Activated CD8-positive, alpha-beta T cell treated with anti-CD3 and anti-CD28 coated beads, Interleukin-2, amount 10 ng/mL, durations not matched to agents 7 days and 5 days (primary cell): ENCODE measurements at regions of chr6 and their contacts with region 1.

Region 1: GRCh38 chr6:13336553-13336952 is 8.2 kb upstream of the TBC1D7 start:
- DNase-seq: peak; percentile 85
- ATAC-seq: peak; percentile 60
- H3K4me3 Mint-ChIP-seq: no peak overlapping the region
- H3K27ac Mint-ChIP-seq: no peak overlapping the region
- H3K4me1 Mint-ChIP-seq: peaks cover 32% of the 10 kb centered on the region
- H3K27me3 Mint-ChIP-seq: peaks cover 6% of the 10 kb centered on the region

Region 2: GRCh38 chr6:13272131-13273046 is 64.2 kb before region 1 on chr6:
- CTCF ChIA-PET with region 1: no interaction called
- POLR2A ChIA-PET with region 1: no interaction called
- DNase-seq: no peak
- ATAC-seq: no peak
- H3K4me3 Mint-ChIP-seq: no peak overlapping the region
- H3K27ac Mint-ChIP-seq: no peak overlapping the region
- H3K4me1 Mint-ChIP-seq: peaks cover 29% of the 10 kb centered on the region
- H3K27me3 Mint-ChIP-seq: peaks cover 12% of the 10 kb centered on the region

Region 3: GRCh38 chr6:13355043-13355951 is 18.7 kb after region 1 on chr6:
- CTCF ChIA-PET with region 1: interaction called, 27 read pairs
- POLR2A ChIA-PET with region 1: no interaction called
- DNase-seq: peak; percentile 57
- ATAC-seq: peak; percentile 65
- H3K4me3 Mint-ChIP-seq: peak overlapping the region; percentile 68
- H3K27ac Mint-ChIP-seq: peak overlapping the region; percentile 97
- H3K4me1 Mint-ChIP-seq: peaks cover 55% of the 10 kb centered on the region
- H3K27me3 Mint-ChIP-seq: no peaks in the 10 kb centered on the region

Region 4: DNA sequence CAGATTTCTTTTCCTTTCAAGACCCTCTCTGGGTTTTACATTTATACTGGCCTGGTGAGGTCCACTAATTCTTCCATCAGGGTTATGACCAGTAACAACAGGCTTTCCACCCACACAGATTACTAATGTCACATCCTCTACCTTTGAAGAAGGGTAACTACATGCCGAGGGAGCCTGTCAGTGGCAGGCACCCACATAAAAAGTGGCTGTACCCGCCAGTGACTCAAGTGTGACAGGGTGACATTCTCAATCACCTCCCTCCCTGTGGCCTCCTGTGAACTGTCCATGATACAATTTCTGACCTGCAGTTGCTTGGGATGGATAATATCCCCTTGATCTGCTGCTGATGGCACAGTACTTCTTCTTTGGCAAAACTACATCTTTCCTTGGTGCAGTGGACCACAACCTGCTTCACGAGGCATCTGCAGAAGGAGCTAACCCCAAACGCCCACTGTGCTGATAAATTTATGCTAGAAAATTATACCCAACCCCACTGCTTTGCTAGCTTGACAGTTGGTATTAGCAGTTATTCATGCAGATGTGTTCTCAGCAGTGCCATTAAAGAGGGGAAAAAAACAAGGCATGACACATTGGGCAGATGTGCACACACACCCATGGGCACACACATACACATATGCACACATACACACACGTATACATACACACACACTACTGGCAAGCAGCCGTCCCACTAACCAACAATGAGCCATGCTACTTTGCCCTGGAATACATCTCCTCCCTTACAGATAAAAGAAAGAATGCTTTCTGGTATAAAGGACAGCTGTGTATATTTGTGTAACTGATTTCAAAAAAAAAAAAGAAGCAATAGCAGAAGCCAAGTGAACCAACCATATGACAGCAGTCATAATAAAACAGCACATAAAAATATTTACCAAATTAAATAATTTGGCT is 130.0 kb after region 1 on chr6:
- CTCF ChIA-PET with region 1: no interaction called
- POLR2A ChIA-PET with region 1: no interaction called
- DNase-seq: no peak
- ATAC-seq: peak; percentile 38
- H3K4me3 Mint-ChIP-seq: no peak overlapping the region
- H3K27ac Mint-ChIP-seq: peak overlapping the region; percentile 22
- H3K4me1 Mint-ChIP-seq: peaks cover 49% of the 10 kb centered on the region
- H3K27me3 Mint-ChIP-seq: no peaks in the 10 kb centered on the region

Region 5: DNA sequence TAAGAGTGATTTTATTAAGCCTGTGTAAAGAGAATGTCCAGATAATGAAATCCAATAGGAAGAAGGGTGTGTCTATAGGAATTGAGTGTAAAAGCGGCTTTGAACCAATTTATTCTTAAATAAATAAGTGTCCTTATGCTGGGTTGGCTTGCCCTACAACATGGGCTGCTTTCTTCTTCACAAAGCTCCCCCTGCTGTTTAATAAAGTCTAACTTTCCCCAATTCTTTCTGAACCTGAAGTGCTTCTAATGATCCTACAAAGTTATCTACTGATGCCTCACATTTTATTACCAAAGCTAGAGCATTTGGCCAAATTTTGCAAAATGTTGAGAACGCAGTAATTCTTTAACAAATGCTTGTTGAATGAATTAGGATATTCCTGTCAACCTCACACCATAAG is 201.5 kb after region 1 on chr6:
- CTCF ChIA-PET with region 1: interaction called, 11 read pairs
- POLR2A ChIA-PET with region 1: no interaction called
- DNase-seq: no peak
- ATAC-seq: no peak
- H3K4me3 Mint-ChIP-seq: no peak overlapping the region
- H3K27ac Mint-ChIP-seq: no peak overlapping the region
- H3K4me1 Mint-ChIP-seq: peaks cover 3% of the 10 kb centered on the region
- H3K27me3 Mint-ChIP-seq: peaks cover 5% of the 10 kb centered on the region